Cardiac septum (tissue), 1 donor: ENCODE measurements at regions of chr22 and their contacts with region 1.

Region 1: GRCh38 chr22:24893341-24894070 is 53.0 kb downstream of the LHFPL7 start:
- DNase-seq: no peak

Region 2: DNA sequence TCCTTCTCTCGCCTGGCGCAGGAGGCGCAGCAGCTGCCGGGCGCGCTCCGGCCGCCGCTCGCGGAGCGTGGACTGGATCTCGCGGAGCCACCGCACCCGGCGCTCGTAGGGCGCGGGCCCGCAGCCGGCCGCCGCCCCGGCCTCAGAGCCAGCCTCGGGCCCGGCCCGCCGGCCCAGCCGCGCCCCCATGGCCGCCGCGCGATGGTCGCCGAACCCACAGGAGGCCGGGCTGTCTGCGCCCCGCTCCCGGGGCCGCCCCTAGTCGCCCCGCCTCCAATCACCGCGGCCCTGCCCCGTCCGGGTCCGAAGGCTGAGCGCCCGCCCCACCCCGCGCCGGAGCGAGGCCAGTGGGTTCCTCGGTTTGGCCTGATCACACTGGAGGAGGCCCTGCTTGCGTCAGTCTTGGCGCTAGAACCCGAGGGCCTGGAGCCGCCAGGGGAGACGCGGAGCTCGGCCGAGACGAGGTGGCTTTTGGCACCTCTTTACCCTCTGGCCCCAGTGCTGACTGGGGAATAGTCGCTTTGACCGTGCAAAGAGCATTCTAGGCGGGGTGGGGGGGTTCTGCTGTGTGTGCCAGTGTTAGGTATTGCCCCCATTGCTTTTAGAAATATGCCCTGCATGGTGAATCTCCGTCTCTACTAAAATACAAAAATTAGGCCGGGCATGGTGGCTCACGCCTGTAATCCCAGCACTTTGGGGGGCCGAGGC is 300.5 kb before region 1 on chr22 and contains the start of gene LRRC75B:
- intact Hi-C with region 1: no loop called
- DNase-seq: peak; percentile 94
- total RNA-seq, gene LRRC75B: 4.2 TPM

Region 3: GRCh38 chr22:24819911-24820461 is 73.5 kb before region 1 on chr22:
- intact Hi-C with region 1: loop called (anchors 1 kb)
- DNase-seq: peak; percentile 82

Region 4: DNA sequence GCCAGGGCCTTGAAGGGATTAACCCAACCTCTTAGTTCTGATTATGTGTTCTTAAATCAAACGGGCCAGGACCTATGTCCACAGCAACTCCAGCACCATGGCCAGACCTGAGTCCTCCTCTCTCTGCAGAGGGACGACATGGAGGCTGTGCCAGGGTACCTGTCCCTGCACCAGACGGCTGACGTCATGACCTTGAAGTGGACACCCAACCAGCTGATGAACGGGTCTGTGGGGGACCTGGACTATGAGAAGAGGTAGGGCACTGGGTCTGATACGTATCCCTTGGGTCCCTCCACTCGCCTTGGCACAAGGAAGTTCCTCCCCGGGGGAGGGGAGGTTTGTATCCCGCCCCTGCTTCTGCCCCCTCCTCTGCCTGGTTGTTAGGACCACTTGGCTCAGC is 33.9 kb before region 1 on chr22:
- intact Hi-C with region 1: no loop called
- DNase-seq: no peak

Region 5: DNA sequence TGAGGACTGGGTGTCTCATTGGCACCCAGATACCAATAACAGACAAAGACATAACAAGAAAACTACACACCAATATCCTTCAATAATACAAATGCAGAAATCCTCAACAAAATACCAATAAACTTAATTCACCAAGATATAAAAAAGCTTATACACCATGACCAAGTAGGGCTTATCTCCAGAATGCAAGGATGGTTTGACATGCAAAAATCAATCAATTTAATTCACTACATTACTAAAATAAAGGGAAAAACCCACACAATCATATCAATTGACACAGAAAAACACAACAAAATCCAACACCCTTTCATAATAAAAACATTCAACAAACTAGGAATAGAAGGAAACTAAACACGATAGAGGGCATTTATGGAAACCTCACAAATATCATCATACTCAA is 12.4 kb after region 1 on chr22:
- intact Hi-C with region 1: no loop called
- DNase-seq: no peak